ENCODE measurements at regions of chr22 and their contacts with region 1.

Region 1: DNA sequence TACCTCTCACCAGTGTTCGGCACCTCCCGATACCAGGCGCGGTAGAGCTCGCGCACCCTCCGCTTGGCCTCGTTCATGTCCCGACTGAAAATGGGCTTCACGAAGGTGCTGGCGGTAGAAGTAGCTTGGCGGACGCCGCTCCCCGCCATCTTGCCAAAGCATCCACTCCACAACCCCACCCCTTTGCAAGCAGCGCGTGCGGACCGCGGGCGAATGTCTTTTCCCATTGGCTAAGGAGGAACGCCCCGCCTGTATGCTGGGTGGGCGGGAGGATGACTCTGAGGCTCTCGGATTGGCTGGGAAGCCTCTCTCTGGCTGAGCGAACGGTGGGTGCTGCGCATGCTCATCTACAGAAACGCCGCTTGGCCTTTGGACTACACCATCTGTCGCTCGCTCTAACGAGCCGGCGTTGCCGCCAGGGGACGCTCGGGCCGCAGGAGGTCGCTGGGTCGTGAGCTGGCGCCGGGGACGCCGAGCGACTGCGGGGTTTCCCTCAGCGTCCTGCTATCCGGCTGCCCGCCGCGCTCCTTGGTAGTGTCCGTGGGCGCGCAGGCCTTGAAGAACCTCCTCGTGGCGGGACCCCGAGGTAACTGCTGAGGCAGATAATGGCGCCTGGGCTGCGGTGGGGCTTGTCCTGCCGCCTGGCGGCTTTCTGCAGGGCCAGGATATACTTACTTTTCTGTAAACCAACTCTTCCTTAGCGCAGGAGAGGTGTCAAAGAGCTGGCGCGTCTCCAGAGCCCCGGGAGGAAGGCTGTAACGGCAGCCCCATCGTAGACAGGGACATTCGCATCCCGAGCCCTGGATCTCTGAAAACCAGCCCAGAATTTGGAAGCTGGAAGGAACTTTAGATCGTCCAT is at the start of gene NDUFA6:
- DNase-seq: peak; percentile 99
- H3K4me3 ChIP-seq: peak within 1 kb of the TSS; percentile 66 to 92 (median 82)
- H3K27ac ChIP-seq: peak within 1 kb of the TSS; percentile 89
- H3K4me1 ChIP-seq: no peaks in the 10 kb centered on the region
- H3K27me3 ChIP-seq: no peaks in the 10 kb centered on the region
- CTCF ChIP-seq: peak; percentile 81 to 99
- total RNA-seq, gene NDUFA6: 32.2 to 98.7 TPM

Region 2: GRCh38 chr22:41925655-41926460 is 165.0 kb before region 1 on chr22:
- CTCF ChIA-PET with region 1: interaction called, 20 read pairs
- dilution Hi-C with region 1: no loop called
- in situ Hi-C with region 1: no loop called
- intact Hi-C with region 1: no loop called
- DNase-seq: no peak
- H3K4me3 ChIP-seq: peak overlapping the region in 2 of 3 experiments; percentile 24 to 37
- H3K27ac ChIP-seq: no peak overlapping the region
- H3K4me1 ChIP-seq: peaks cover 7% of the 10 kb centered on the region
- H3K27me3 ChIP-seq: peaks cover 4% of the 10 kb centered on the region
- CTCF ChIP-seq: peak; percentile 60 to 68

Region 3: DNA sequence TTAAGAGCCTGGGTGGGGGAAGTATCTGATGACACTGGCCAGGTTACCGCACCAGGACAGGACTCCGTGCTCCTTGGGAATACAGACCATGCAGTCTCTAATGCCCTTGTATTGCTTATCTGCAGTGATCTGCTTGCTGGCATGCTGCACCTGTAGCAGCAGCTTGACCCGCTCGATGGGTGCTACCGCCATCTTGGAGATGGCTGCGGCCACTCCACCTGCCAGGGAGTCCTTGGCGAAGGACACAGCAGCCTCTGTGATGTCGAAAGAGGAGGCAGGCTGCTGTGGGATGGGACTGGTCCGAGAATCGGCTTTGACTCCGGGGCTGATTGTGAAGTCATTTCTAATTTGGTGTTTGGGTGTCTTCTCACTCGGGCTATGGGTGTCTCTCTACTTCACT is 89.1 kb before region 1 on chr22:
- CTCF ChIA-PET with region 1: no interaction called
- dilution Hi-C with region 1: no loop called
- in situ Hi-C with region 1: no loop called
- intact Hi-C with region 1: no loop called
- DNase-seq: no peak
- H3K4me3 ChIP-seq: no peak overlapping the region
- H3K27ac ChIP-seq: no peak overlapping the region
- H3K4me1 ChIP-seq: no peaks in the 10 kb centered on the region
- H3K27me3 ChIP-seq: no peaks in the 10 kb centered on the region
- CTCF ChIP-seq: no peak

Region 4: GRCh38 chr22:42160830-42161696 is 70.2 kb after region 1 on chr22:
- CTCF ChIA-PET with region 1: interaction called, 3 read pairs
- dilution Hi-C with region 1: no loop called
- in situ Hi-C with region 1: no loop called
- intact Hi-C with region 1: loop called (anchors 5 kb)
- DNase-seq: no peak
- H3K4me3 ChIP-seq: no peak overlapping the region
- H3K27ac ChIP-seq: no peak overlapping the region
- H3K4me1 ChIP-seq: peaks cover 36% of the 10 kb centered on the region
- H3K27me3 ChIP-seq: no peaks in the 10 kb centered on the region
- CTCF ChIP-seq: no peak

Region 5: GRCh38 chr22:42313804-42314581 is 223.2 kb after region 1 on chr22:
- CTCF ChIA-PET with region 1: interaction called, 3 read pairs
- dilution Hi-C with region 1: no loop called
- in situ Hi-C with region 1: no loop called
- intact Hi-C with region 1: loop called (anchors 1 kb)
- DNase-seq: peak; percentile 84
- H3K4me3 ChIP-seq: no peak overlapping the region
- H3K27ac ChIP-seq: peak overlapping the region; percentile 6
- H3K4me1 ChIP-seq: peaks cover 54% of the 10 kb centered on the region
- H3K27me3 ChIP-seq: no peaks in the 10 kb centered on the region
- CTCF ChIP-seq: peak; percentile 45 to 68

Region 6: GRCh38 chr22:42437488-42438292 is 346.9 kb after region 1 on chr22:
- CTCF ChIA-PET with region 1: interaction called, 5 read pairs
- dilution Hi-C with region 1: no loop called
- in situ Hi-C with region 1: loop called in 1 of 2 experiments (anchors 10 kb)
- intact Hi-C with region 1: loop called (anchors 1 kb)
- DNase-seq: peak; percentile 52
- H3K4me3 ChIP-seq: peak overlapping the region; percentile 48 to 69 (median 54)
- H3K27ac ChIP-seq: no peak overlapping the region
- H3K4me1 ChIP-seq: peaks cover 35% of the 10 kb centered on the region
- H3K27me3 ChIP-seq: no peaks in the 10 kb centered on the region
- CTCF ChIP-seq: peak; percentile 92 to 99

Region 7: GRCh38 chr22:42473484-42474193 is 382.8 kb after region 1 on chr22:
- CTCF ChIA-PET with region 1: no interaction called
- dilution Hi-C with region 1: no loop called
- in situ Hi-C with region 1: no loop called
- intact Hi-C with region 1: loop called (anchors 10 kb)
- DNase-seq: peak; percentile 53
- H3K4me3 ChIP-seq: no peak overlapping the region
- H3K27ac ChIP-seq: no peak overlapping the region
- H3K4me1 ChIP-seq: no peaks in the 10 kb centered on the region
- H3K27me3 ChIP-seq: no peaks in the 10 kb centered on the region
- CTCF ChIP-seq: peak; percentile 71 to 83